Right ventricle myocardium inferior (tissue), 1 donor: ENCODE measurements at regions of chr9 and their contacts with region 1.

Region 1: DNA sequence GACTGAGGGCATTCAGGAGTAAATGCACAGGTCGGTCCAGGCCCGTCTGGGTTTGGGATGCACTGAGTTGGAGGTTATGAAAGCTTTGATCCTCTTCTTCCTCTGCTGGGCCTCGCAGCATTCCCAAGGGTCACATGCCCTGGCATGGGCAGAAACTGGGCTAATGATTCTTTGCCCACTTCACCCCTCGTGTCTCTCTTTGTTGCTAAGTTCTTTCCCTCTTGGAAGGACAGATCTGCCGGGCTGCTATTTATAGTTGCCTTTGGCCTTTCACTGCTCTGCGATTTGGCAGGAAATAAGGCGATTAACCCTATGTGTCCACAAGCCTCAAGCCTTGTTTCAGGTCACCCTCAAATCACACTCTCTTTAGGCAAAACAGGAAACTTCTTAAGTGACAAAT is 66.9 kb downstream of the ENTREP1 start:
- DNase-seq: no peak
- ATAC-seq: peak; percentile 88

Region 2: GRCh38 chr9:69215774-69216485 is 176.0 kb before region 1 on chr9:
- intact Hi-C with region 1: loop called (anchors 5 kb)
- DNase-seq: no peak
- ATAC-seq: peak; percentile 79